ENCODE measurements at regions of chr4 and their contacts with region 1.

Region 1: DNA sequence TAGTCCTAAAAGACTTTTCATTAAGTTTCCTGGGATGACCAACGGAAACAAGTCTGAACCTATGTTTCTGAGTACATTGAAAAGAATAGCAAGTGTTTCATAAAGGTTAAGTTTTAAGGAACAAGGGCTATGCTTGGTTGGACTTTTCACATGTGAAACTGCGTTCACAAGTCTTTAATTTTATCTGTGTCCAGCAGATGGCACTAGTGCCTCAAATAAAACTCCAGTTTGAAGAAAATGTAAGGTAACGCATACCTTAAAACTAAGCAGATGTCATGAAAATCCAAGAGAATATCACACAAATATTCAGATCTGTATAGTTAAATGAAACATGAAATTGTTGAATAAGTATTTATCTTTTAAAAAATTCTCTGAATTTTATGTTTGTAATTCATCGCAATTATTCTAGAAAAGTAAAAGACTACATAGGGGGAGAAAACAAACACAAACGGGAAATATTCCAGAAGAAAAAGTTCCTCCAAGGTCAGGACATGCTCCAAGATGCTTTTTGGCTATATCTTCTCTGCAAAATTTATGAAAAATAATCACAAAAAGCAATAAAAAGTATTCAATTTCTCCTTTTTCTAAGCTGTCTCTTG is 89.6 kb upstream of the MAD2L1 start:
- DNase-seq: peak; percentile 58
- ATAC-seq: peak; percentile 52
- H3K4me3 ChIP-seq: no peak overlapping the region
- H3K27ac ChIP-seq: no peak overlapping the region
- H3K4me1 ChIP-seq: no peaks in the 10 kb centered on the region
- H3K27me3 ChIP-seq: no peaks in the 10 kb centered on the region
- CTCF ChIP-seq: peak; percentile 70
- EP300 ChIP-seq: no peak
- POLR2A ChIP-seq: no peak
- RAD21 ChIP-seq: no peak

Region 2: DNA sequence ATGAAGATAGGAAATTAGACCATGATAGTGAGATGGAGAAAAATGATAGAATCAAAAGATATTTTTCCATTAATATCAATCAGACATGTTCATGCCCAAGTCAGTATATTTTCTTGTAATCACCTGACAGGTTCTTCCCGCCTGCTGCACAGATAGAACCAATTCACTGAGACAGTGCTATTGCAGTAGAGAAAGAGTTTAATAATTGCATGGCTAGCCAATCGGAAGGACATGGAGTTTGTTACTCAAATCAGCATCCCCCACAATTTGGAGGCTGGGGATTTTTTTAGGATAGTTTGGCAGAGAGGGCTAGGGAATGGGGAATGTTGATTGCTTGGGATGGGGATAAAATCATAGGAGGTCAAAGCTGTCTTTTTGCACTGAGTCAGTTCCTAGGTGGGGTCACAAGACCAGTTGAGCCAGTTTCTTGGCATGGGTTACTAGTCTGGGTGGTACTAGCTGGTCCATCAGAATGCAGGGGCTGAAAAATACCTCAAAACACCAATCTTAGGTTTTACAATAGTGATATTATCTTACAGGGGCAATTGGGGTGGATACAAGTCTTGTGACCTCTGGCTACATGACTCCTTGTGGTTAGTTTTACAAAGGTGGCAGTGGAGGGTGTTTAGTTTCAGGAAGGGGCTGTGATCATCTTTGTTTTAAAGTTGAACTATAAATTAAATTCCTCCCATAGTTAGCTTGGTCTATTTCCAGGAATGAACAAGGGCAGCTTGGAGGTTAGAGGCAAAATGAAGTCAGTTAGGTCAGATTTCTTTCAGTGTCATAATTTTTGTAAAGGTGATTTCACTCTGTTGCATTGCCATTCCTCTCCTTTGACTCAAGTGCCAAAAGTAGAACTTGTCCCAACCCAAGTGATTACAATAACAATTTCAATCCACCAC is 427.3 kb before region 1 on chr4:
- CTCF ChIA-PET with region 1: no interaction called
- POLR2A ChIA-PET with region 1: no interaction called
- in situ Hi-C with region 1: no loop called
- intact Hi-C with region 1: no loop called
- DNase-seq: no peak
- ATAC-seq: no peak
- H3K4me3 ChIP-seq: no peak overlapping the region
- H3K27ac ChIP-seq: no peak overlapping the region
- H3K4me1 ChIP-seq: peaks cover 11% of the 10 kb centered on the region
- H3K27me3 ChIP-seq: no peaks in the 10 kb centered on the region
- CTCF ChIP-seq: no peak
- EP300 ChIP-seq: no peak
- POLR2A ChIP-seq: no peak
- RAD21 ChIP-seq: no peak

Region 3: GRCh38 chr4:119755599-119755998 is 400.6 kb before region 1 on chr4:
- CTCF ChIA-PET with region 1: no interaction called
- POLR2A ChIA-PET with region 1: no interaction called
- in situ Hi-C with region 1: no loop called
- intact Hi-C with region 1: no loop called
- DNase-seq: no peak
- ATAC-seq: no peak
- H3K4me3 ChIP-seq: no peak overlapping the region
- H3K27ac ChIP-seq: no peak overlapping the region
- H3K4me1 ChIP-seq: no peaks in the 10 kb centered on the region
- H3K27me3 ChIP-seq: no peaks in the 10 kb centered on the region
- CTCF ChIP-seq: no peak
- EP300 ChIP-seq: no peak
- POLR2A ChIP-seq: no peak
- RAD21 ChIP-seq: no peak

Region 4: DNA sequence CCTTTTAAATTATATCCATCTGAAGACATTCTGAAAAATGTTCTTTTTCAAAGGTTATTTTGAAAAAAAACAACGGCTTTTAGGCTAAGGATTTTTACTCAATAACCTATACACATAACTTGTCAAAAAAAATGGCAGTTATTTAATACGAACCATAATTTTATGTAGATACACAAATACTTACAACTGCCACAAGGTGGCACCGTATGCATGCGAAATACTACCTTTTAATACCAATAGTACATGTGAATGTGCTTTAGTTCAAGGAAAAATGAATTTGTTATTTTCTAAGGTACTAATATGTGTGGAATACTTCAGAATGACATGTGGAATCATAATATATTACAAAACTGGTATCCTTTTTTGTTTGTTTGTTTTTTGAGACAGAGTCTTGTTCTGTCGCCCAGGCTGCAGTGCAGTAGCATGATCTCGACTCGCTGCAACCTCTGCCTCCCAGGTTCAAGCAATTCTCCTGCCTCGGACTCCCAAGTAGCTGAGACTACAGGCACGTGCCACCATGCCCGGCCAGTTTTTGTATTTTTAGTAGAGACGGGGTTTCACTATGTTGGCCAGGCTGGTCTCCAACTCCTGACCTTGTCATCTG is 84.9 kb before region 1 on chr4:
- CTCF ChIA-PET with region 1: no interaction called
- POLR2A ChIA-PET with region 1: no interaction called
- in situ Hi-C with region 1: no loop called
- intact Hi-C with region 1: loop called (anchors 1 kb)
- DNase-seq: peak; percentile 43
- ATAC-seq: no peak
- H3K4me3 ChIP-seq: no peak overlapping the region
- H3K27ac ChIP-seq: no peak overlapping the region
- H3K4me1 ChIP-seq: peaks cover 19% of the 10 kb centered on the region; the same call in 1 of the 2 replicates
- H3K27me3 ChIP-seq: no peaks in the 10 kb centered on the region; a peak in 1 of 5 replicates
- CTCF ChIP-seq: peak; percentile 61
- EP300 ChIP-seq: no peak
- POLR2A ChIP-seq: no peak
- RAD21 ChIP-seq: no peak

Region 5: DNA sequence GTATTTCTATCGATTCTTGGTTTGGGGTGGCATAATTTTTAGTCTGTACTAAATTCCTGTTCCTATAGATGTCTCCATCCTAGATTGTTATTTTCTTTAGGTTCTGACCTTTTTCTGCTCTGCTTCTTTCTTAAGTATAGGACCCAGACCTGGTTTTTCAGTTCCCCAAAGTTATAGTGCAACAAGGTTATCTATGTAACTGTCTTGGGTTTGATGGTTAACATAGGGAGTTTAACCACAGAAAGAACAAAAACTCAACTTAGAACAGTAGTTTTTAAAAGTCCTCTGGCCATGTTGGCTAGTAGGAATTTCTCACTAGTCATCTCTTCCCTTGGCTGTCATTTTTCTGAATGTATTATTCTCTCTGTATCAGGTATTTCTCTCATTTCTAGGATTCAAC is 50.7 kb before region 1 on chr4:
- CTCF ChIA-PET with region 1: no interaction called
- POLR2A ChIA-PET with region 1: no interaction called
- in situ Hi-C with region 1: no loop called
- intact Hi-C with region 1: no loop called
- DNase-seq: no peak
- ATAC-seq: no peak
- H3K4me3 ChIP-seq: no peak overlapping the region
- H3K27ac ChIP-seq: no peak overlapping the region
- H3K4me1 ChIP-seq: no peaks in the 10 kb centered on the region
- H3K27me3 ChIP-seq: no peaks in the 10 kb centered on the region; a peak in 1 of 5 replicates
- CTCF ChIP-seq: no peak
- EP300 ChIP-seq: no peak
- POLR2A ChIP-seq: no peak
- RAD21 ChIP-seq: no peak

Region 6: DNA sequence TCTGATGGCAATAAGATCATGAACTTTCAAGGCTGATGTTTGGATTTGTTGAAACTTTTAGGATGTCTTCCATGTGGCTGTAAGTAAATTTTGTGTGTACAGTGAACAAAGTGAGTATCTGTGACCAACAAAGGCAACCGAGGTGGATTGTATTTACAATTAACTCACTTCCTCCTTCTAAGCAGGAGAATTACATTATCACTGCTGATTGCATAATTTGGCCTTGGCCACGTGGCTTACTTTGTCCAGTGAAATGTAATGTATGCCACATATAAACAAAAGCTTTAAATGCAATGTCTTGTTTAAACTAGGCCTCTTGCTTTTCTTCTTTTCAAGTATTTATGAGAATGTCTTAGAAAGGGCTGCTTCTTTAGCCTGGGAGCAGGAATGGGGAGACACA is 23.3 kb before region 1 on chr4:
- CTCF ChIA-PET with region 1: no interaction called
- POLR2A ChIA-PET with region 1: no interaction called
- in situ Hi-C with region 1: no loop called
- intact Hi-C with region 1: no loop called
- DNase-seq: no peak
- ATAC-seq: no peak
- H3K4me3 ChIP-seq: no peak overlapping the region
- H3K27ac ChIP-seq: no peak overlapping the region
- H3K4me1 ChIP-seq: no peaks in the 10 kb centered on the region
- H3K27me3 ChIP-seq: no peaks in the 10 kb centered on the region
- CTCF ChIP-seq: no peak
- EP300 ChIP-seq: no peak
- POLR2A ChIP-seq: no peak
- RAD21 ChIP-seq: no peak

Region 7: DNA sequence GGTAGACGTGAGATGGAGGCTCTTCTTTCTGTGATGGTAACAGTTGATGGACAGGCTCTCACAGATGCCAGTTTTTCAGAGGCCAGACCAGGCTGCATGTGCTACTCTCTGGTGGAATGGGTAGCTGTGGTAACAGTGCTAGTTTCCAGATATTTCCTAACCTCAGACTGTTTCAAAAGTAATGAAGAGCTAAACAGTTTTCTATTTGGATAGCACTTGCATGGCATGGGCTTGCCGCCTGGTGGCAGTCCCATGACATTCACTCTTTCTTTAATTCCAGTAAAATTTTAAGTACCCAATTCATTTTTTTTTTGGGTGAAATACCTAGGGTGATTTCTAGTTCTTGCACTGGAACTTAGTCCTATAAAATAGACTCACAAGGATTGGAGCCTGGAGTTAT is 130.6 kb after region 1 on chr4:
- CTCF ChIA-PET with region 1: no interaction called
- POLR2A ChIA-PET with region 1: no interaction called
- in situ Hi-C with region 1: no loop called
- intact Hi-C with region 1: loop called (anchors 10 kb)
- DNase-seq: no peak
- ATAC-seq: no peak
- H3K4me3 ChIP-seq: no peak overlapping the region
- H3K27ac ChIP-seq: no peak overlapping the region
- H3K4me1 ChIP-seq: no peaks in the 10 kb centered on the region
- H3K27me3 ChIP-seq: no peaks in the 10 kb centered on the region
- CTCF ChIP-seq: no peak
- EP300 ChIP-seq: no peak
- POLR2A ChIP-seq: no peak
- RAD21 ChIP-seq: no peak

Region 8: DNA sequence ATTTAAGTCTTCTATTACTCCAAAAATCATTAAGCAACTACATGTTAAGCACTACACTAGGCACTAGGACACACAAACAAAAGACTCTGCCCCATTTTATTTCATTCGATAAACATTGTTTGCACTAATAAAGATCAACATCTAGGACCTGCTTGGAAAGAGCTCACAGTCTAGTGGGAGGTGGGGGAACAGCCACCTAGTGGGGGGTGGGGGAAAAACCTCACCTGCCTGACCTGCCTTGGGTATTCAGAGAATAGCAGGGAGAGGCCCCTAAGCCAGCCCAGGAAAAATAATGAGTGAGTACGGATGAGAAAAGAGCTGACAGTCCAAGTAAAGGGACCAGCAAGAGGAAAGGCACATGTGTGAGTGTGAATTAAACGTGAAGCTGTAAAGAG is 714.1 kb after region 1 on chr4:
- CTCF ChIA-PET with region 1: no interaction called
- POLR2A ChIA-PET with region 1: no interaction called
- in situ Hi-C with region 1: no loop called
- intact Hi-C with region 1: loop called (anchors 1 kb)
- DNase-seq: peak; percentile 4
- ATAC-seq: peak; percentile 95
- H3K4me3 ChIP-seq: no peak overlapping the region
- H3K27ac ChIP-seq: no peak overlapping the region
- H3K4me1 ChIP-seq: no peaks in the 10 kb centered on the region
- H3K27me3 ChIP-seq: no peaks in the 10 kb centered on the region
- CTCF ChIP-seq: 0 out of 2 replicates have a peak, but pooled peaks have one; percentile 19
- EP300 ChIP-seq: no peak
- POLR2A ChIP-seq: no peak
- RAD21 ChIP-seq: no peak

Region 9: DNA sequence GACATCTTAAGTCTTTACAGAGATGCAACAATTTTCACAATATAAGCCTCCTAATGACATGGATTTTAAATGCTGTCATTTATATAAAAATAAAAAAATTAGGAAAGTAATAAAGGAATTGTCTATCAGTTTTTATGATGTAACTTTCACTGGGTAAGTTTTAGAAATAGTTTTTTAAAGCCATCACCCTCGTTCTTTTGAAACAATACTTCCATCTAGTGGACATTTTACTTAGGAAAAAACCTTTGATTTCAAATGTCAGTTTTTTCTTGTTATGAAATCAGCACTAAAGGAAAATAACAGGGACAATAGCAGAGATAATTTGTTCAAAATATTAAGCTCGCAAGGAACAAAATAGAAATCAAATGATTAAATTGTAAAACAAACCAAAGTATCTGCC is 940.4 kb after region 1 on chr4:
- CTCF ChIA-PET with region 1: interaction called, 15 read pairs
- POLR2A ChIA-PET with region 1: no interaction called
- in situ Hi-C with region 1: loop called (anchors 10 kb)
- intact Hi-C with region 1: no loop called
- DNase-seq: peak; percentile 7
- ATAC-seq: no peak
- H3K4me3 ChIP-seq: no peak overlapping the region
- H3K27ac ChIP-seq: no peak overlapping the region
- H3K4me1 ChIP-seq: no peaks in the 10 kb centered on the region
- H3K27me3 ChIP-seq: no peaks in the 10 kb centered on the region
- CTCF ChIP-seq: 0 out of 2 replicates have a peak, but pooled peaks have one; percentile 18
- EP300 ChIP-seq: no peak
- POLR2A ChIP-seq: no peak
- RAD21 ChIP-seq: no peak

Region 10: DNA sequence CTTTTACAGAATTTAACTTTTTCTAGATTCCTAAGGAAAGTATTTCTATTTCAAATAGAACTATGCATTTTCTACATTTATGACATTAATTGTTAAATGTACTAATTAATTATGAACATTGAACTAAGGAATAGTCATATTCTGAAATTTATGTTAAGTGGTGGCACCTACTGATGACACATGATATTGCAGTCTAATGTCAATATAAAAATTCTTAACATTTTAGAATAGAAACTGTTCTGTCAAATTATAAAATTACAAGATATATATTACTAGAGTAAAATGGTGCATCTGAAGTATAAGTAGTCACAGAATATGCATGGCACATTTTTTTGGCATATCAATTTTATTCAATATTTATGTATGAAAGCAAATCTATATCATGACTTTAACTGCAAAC is 956.3 kb after region 1 on chr4:
- CTCF ChIA-PET with region 1: interaction called, 4 read pairs
- POLR2A ChIA-PET with region 1: no interaction called
- in situ Hi-C with region 1: no loop called
- intact Hi-C with region 1: loop called (anchors 1 kb)
- DNase-seq: no peak
- ATAC-seq: no peak
- H3K4me3 ChIP-seq: no peak overlapping the region
- H3K27ac ChIP-seq: no peak overlapping the region
- H3K4me1 ChIP-seq: no peaks in the 10 kb centered on the region
- H3K27me3 ChIP-seq: no peaks in the 10 kb centered on the region; a peak in 1 of 5 replicates
- CTCF ChIP-seq: no peak
- EP300 ChIP-seq: no peak
- POLR2A ChIP-seq: no peak
- RAD21 ChIP-seq: no peak